Vagina (tissue), 2 donors: ENCODE measurements at regions of chr5 and their contacts with region 1.

Region 1: GRCh38 chr5:38666668-38667498 is 110.4 kb upstream of the LIFR start:
- DNase-seq: no peak
- H3K4me3 ChIP-seq: no peak overlapping the region
- H3K27ac ChIP-seq: no peak overlapping the region
- H3K4me1 ChIP-seq: no peaks in the 10 kb centered on the region
- H3K27me3 ChIP-seq: no peaks in the 10 kb centered on the region
- CTCF ChIP-seq: peak in 1 of 3 experiments; percentile 27
- POLR2A ChIP-seq: no peak

Region 2: GRCh38 chr5:37771731-37772130 is 895.2 kb before region 1 on chr5:
- intact Hi-C with region 1: no loop called
- DNase-seq: no peak
- H3K4me3 ChIP-seq: no peak overlapping the region
- H3K27ac ChIP-seq: no peak overlapping the region
- H3K4me1 ChIP-seq: no peaks in the 10 kb centered on the region
- H3K27me3 ChIP-seq: no peaks in the 10 kb centered on the region
- CTCF ChIP-seq: no peak
- POLR2A ChIP-seq: no peak

Region 3: DNA sequence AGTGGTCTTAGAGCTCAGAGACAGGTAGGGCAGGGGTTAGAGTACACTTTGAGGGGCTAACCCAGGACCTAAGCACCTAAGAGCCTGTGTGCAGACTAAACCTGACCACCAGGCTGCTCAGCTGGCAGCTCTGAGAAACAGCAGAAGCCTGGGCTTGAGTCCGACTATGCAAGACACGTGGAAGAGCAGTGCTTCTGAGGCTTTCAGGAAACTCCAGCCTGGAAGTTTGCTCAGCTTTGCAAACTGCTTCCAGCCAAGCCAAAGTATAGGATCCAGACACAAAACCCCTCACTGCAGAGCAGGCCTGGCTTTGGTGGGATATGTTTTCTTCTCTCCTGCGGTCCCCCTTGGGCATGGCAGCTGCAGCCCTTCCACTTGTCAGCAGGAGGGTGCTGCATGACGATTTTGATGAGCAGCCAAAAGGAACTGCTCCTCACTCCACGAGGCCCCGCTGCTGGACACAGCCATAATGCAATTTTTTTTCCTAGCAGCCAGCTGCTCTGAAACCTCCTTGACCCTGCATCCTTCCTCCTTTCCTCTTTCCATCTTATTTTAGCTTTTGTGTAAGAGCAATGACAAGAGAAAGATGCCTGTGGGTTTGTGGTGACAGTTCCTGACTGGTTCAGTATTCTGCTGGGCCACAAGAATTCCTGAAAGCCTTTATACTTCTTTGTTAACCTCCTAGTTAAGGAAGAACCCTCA is 233.6 kb before region 1 on chr5:
- intact Hi-C with region 1: loop called (anchors 10 kb)
- DNase-seq: no peak
- H3K4me3 ChIP-seq: no peak overlapping the region
- H3K27ac ChIP-seq: peak overlapping the region; percentile 21
- H3K4me1 ChIP-seq: peaks cover 14% of the 10 kb centered on the region
- H3K27me3 ChIP-seq: no peaks in the 10 kb centered on the region
- CTCF ChIP-seq: no peak
- POLR2A ChIP-seq: no peak

Region 4: DNA sequence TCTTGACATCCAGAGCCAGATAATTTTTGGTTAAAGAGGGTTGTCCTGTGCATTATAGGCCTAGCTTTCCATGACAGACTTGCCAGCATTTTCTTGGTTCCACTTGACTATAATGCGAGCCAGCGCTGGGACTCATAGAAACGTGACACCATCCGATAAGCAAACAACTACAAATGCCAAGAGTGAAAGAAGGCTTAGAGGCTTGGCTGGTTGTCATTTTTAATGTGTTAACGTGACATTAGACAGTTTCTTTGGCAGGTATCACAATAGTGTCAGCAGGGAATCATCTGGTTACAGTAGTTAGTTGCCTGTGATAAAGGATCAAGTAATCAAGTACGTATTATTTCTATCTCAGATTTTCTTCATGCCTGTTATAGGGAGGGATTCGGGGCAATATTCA is 90.4 kb before region 1 on chr5:
- intact Hi-C with region 1: no loop called
- DNase-seq: no peak
- H3K4me3 ChIP-seq: no peak overlapping the region
- H3K27ac ChIP-seq: no peak overlapping the region
- H3K4me1 ChIP-seq: no peaks in the 10 kb centered on the region
- H3K27me3 ChIP-seq: no peaks in the 10 kb centered on the region
- CTCF ChIP-seq: no peak
- POLR2A ChIP-seq: no peak

Region 5: DNA sequence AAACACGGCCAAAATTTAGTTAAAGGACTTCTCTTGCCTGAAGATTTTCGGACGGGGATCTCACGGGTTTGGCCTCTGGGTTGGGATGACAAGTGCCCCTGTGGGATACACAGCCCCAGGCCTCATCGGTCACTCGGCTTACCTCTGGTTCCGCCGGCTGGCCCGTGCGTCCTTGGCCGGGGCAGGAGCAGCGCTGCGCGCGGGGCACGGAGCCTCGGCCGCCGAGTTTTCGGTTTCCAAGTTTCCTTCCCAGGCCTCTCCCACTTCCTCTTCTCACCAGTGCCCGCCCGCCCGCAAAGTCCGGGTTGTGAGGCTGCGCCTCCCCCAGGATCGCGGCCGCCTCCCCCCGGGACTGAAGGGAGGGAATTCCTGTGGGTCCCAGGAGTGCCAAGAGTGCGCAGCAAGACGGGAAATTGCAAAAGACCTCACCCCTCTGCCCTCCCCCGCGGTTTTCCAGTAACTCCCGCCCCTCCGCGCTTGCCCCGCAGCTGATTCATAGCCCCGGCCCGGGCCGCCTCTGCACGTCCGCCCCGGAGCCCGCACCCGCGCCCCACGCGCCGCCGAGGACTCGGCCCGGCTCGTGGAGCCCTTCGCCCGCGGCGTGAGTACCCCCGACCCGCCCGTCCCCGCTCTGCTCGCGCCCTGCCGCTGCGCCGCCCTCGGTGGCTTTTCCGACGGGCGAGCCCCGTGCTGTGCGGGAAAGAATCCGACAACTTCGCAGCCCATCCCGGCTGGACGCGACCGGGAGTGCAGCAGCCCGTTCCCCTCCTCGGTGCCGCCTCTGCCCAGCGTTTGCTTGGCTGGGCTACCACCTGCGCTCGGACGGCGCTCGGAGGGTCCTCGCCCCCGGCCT is 178.9 kb after region 1 on chr5 and contains the start of gene OSMR:
- intact Hi-C with region 1: no loop called
- DNase-seq: peak in 1 of 2 donors; percentile 98
- H3K4me3 ChIP-seq: peak within 1 kb of the TSS; percentile 73 to 92
- H3K27ac ChIP-seq: peak within 1 kb of the TSS; percentile 92
- H3K4me1 ChIP-seq: peaks cover 34% of the 10 kb centered on the region
- H3K27me3 ChIP-seq: no peaks in the 10 kb centered on the region
- CTCF ChIP-seq: peak in 1 of 3 experiments; percentile 1
- POLR2A ChIP-seq: peak in 1 of 2 donors; percentile 86
- total RNA-seq, gene OSMR: 69.0 TPM

Region 6: DNA sequence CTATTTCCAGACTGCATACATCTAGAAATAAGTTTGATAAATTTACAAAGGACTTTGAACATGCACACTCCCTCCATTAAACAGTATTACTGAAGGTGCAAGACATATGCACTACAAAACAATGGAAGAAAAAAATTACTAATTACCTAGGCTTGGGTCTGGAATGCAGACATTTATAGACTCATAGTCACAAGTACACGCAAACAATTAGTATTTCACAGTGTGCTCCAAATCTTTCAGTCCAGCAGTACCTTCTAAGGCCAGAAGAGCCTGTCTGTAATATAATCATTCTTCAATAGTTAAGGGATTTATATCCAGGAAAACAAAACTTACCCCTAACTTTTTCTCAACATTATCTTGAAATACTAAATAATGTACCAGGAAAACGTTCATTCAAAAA is 396.2 kb after region 1 on chr5:
- intact Hi-C with region 1: no loop called
- DNase-seq: no peak
- H3K4me3 ChIP-seq: no peak overlapping the region
- H3K27ac ChIP-seq: peak overlapping the region; percentile 15
- H3K4me1 ChIP-seq: peaks cover 51% of the 10 kb centered on the region
- H3K27me3 ChIP-seq: no peaks in the 10 kb centered on the region
- CTCF ChIP-seq: no peak
- POLR2A ChIP-seq: no peak